ENCODE measurements at regions of chr6 and their contacts with region 1.

Region 1: DNA sequence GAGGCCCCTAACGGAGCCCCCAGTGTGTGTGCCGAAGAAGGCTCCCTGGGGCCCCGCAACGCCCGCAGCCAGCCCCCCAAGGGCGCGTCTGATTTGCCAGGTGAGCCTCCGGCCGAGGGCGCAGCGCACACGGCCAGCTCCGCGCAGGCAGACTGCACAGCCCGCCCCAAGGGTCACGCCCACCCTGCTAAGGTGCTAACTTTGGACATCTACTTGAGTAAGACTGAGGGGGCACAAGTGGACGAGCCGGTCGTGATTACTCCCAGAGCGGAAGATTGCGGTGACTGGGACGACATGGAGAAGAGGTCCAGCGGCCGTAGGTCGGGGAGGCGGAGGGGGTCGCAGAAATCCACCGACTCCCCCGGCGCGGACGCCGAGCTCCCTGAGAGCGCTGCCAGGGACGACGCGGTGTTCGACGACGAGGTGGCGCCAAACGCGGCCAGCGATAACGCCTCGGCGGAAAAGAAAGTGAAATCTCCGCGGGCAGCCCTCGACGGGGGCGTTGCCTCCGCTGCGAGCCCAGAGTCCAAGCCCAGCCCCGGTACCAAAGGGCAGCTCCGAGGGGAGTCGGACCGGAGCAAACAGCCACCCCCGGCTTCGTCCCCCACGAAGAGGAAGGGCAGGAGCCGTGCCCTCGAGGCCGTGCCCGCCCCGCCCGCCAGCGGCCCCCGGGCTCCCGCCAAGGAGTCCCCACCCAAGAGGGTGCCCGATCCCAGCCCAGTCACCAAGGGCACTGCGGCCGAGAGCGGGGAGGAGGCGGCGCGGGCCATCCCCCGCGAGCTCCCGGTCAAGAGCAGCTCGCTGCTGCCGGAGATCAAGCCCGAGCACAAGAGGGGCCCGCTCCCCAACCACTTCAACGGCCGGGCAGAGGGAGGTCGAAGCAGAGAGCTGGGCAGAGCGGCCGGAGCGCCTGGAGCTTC is 117.0 kb downstream of the RTN4IP1 start:
- DNase-seq: peak; percentile 83
- H3K4me3 Mint-ChIP-seq: peak overlapping the region; percentile 89
- H3K27ac Mint-ChIP-seq: peak overlapping the region; percentile 73
- H3K4me1 Mint-ChIP-seq: peaks cover 11% of the 10 kb centered on the region
- H3K27me3 Mint-ChIP-seq: no peaks in the 10 kb centered on the region
- CTCF ChIP-seq: no peak

Region 2: DNA sequence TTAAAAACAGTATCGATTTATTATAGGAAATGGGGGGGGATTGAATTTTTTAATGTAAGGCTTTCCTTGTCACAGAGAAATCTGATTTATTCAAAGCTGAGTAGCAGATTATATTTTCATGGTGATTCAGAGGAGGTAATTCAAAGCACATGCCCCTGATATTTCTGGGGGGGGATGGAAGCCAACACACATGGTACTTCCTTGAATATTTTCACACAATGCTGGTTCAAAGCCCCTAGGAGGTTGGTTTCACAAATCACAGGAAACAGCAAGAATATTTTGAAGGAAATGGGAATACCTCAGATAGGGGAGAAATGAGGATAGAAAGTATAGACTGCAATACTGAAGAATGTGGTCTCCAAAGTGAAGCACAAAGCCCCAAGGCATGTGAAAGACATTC is 18.2 kb after region 1 on chr6:
- CTCF ChIA-PET with region 1: no interaction called
- intact Hi-C with region 1: loop called (anchors 2 kb)
- DNase-seq: no peak
- H3K4me3 Mint-ChIP-seq: no peak overlapping the region
- H3K27ac Mint-ChIP-seq: peak overlapping the region; percentile 64
- H3K4me1 Mint-ChIP-seq: peaks cover 60% of the 10 kb centered on the region
- H3K27me3 Mint-ChIP-seq: no peaks in the 10 kb centered on the region
- CTCF ChIP-seq: no peak

Region 3: DNA sequence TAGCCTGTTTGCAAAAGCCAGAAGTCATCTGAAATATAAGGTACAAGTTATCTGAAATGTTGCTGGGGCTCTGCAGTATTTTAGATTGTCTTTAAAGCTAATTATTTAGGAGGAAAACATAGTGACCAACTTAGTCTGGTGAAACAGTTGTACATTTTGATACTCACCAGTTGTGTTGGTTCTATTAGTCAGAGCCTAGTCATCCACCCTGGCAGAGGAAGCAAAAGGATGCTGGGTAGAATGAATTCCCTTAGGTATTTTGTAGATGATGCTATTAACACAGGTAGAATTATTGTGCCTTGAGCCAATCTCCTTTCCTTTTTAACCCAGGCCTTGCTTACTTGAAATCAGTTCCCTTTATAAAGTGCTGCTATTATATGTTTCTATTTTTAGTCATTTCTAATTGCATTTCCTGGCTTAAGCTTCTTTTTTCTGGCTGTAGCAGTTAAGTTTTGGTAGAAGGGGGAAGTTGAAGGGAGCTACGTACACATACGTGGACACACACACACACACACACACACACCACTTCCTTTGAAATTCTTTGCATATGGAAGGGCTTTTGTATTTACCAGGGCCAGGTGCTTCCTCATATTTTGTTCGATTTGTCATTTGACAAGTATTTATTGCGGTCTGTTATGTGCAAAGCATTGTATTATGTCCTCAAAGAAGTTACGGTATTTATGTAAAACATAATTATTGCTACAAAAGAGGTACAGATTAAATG is 34.5 kb after region 1 on chr6:
- CTCF ChIA-PET with region 1: interaction called, 10 read pairs
- intact Hi-C with region 1: loop called (anchors 2 kb)
- DNase-seq: peak; percentile 54
- H3K4me3 Mint-ChIP-seq: peak overlapping the region; percentile 21
- H3K27ac Mint-ChIP-seq: peak overlapping the region; percentile 95
- H3K4me1 Mint-ChIP-seq: peaks cover 34% of the 10 kb centered on the region
- H3K27me3 Mint-ChIP-seq: no peaks in the 10 kb centered on the region
- CTCF ChIP-seq: no peak

Measured in Calu3 (cell line).